HAP-1 (cell line): ENCODE measurements at regions of chr3 and their contacts with region 1.

Region 1: GRCh38 chr3:52685709-52686691 is at the starts of genes GNL3 and PBRM1:
- DNase-seq: peak; percentile 93 to 94
- H3K4me3 ChIP-seq: peak within 1 kb of the TSS; percentile 91
- H3K4me1 ChIP-seq: peaks cover 17% of the 10 kb centered on the region
- H3K27me3 ChIP-seq: no peaks in the 10 kb centered on the region

Region 2: DNA sequence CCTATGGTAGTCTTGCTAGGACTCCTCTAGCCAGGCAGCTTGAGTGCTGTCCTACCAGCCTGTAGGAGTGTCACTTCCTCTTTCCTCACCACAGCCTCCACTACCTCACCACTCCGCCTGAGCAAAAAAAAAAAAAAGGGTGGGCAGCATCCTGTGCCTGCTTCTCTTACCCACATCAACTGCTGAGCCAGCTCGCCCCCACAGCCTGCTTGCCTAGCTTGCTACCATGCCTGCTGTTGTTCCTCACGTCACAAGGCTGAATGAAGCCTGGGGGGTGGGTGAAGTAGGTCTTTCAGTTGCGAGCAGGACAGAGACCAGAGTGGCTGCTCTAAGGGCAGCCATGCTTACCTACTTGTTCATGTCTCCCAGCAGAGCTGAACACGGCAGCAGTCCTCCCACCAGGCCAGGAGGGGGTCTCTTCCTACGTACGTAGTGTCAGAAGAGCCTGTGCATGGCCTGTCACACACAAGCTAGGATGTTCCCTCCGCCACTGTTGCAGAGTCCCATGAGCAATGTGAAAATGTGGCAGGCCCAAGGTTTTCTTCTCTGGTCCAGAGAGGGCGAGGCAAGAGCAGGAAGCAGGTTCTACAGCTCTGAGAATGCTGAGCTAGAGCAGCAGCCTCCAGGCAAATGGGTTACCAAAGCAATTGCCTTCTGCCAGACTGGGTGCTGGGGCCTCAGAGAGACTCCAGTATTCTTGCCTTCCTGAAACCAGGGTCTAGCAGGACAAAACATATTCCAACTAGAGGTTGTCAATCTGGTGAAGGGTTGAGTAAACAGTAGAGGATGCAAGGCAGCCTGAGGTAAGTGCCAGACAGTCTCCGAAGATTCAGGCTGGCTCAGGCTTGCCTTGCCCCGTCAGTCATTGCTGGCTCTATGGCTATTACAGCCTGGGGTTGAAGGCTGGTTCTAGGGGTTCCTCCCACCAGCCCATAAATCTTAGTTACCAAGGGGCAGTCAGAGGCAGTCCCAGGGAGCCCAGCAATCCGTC is 432.4 kb before region 1 on chr3:
- in situ Hi-C with region 1: loop called (anchors 25 kb)
- DNase-seq: no peak
- H3K4me3 ChIP-seq: no peak overlapping the region
- H3K4me1 ChIP-seq: no peaks in the 10 kb centered on the region
- H3K27me3 ChIP-seq: no peaks in the 10 kb centered on the region

Region 3: GRCh38 chr3:52536369-52537164 is 149.4 kb before region 1 on chr3 and contains the start of gene UQCC5:
- in situ Hi-C with region 1: loop called (anchors 10 kb)
- DNase-seq: peak; percentile 97 to 98
- H3K4me3 ChIP-seq: peak within 1 kb of the TSS; percentile 65
- H3K4me1 ChIP-seq: peaks cover 20% of the 10 kb centered on the region
- H3K27me3 ChIP-seq: no peaks in the 10 kb centered on the region

Region 4: DNA sequence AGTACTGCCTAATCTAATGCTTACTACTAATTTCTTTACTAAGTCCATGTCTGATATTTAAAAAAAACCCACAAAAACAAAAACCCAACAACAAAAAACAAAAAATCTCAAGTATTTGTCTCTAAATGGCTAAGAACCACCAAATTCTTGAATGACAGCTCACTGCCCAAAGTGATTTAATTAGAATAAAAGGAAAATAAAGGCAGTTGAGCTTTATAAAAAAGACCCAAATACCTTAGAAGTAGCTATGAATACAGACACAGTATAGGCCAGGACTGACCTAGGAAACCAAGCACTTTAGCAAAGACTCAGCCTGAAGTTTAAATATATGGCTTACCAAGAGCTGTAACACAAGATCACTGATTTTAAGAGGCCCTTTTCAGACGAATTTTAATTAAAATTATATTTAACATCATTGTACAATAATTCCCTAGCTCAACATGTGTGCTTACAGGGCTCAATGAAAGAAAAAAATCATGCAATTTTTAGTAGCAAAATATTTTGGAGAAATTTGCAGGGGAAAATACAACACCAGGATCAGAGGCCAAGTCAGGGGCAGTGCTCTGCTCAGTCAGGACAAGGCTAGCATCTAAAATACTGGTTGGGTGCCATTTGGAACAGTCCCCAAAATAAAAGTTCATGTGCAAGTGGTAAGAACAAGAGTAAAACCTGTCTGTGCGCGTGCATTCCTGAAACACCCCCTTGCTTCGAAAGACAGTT is 124.8 kb before region 1 on chr3:
- in situ Hi-C with region 1: no loop called
- DNase-seq: no peak
- H3K4me3 ChIP-seq: no peak overlapping the region
- H3K4me1 ChIP-seq: peaks cover 11% of the 10 kb centered on the region
- H3K27me3 ChIP-seq: no peaks in the 10 kb centered on the region

Region 5: DNA sequence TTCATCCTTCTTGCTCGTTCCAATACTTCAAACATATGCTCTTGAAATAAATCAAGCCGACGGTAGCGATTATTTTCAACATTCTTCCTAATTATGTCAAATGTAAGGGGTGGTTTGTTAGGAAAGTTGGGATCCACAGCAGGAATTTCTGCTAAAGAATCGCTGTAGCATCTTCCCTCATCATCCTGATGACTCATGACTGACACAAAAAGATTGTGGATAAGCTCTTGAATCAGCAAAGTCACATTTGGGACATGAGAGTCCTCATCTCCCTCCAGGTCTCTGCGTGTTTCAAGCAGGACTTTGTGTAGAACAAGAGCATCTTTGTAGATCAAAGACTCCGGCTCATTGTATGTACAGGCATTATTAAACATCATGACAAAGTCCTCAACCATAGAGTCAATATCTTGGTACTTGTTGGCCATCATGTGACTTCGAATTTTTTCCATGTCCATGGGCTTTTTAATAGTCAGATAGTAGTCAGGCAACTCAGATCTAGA is 76.6 kb before region 1 on chr3:
- in situ Hi-C with region 1: no loop called
- DNase-seq: no peak
- H3K4me3 ChIP-seq: no peak overlapping the region
- H3K4me1 ChIP-seq: peaks cover 6% of the 10 kb centered on the region
- H3K27me3 ChIP-seq: no peaks in the 10 kb centered on the region